Activated naive CD4-positive, alpha-beta T cell treated with anti-CD3 and anti-CD28 coated beads for 36 hours (primary cell): ENCODE measurements at regions of chr20 and their contacts with region 1.

Region 1: DNA sequence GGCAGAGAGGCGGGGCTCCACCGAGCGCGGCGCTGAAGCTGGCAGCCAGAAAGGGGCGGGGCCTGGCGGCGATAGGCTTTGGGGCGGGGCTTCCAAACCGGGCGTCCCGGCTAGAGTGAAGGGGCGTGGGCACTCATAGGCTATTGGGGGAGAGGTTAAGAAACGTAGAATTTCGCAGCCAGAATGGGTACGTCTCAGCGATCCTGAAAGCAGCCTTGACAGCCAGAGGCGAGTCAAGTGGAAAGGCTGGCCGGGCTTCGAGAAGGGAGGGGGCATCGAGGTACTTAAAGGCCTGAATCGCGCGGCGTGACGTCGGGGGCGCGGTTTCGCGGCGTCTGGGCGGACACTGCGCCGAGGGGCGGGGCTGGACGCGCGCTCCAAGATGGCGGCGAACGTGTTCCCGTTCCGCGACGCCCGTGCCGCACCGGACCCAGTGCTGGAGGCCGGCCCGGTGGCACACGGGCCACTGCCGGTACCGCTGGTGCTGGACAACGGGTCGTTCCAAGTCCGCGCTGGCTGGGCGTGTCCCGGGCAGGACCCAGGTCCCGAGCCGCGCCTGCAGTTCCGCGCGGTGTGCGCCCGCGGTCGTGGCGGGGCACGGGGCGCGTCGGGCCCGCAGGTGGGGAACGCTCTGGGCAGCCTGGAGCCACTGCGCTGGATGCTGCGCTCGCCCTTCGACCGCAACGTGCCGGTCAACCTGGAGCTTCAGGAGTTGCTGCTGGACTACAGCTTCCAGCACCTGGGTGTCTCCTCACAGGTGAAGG is at the start of gene ACTR5:
- DNase-seq: peak; percentile 97
- H3K4me3 Mint-ChIP-seq: peak within 1 kb of the TSS; percentile 97
- H3K27ac Mint-ChIP-seq: peak within 1 kb of the TSS; percentile 93
- H3K4me1 Mint-ChIP-seq: peaks cover 15% of the 10 kb centered on the region
- H3K27me3 Mint-ChIP-seq: no peaks in the 10 kb centered on the region
- total RNA-seq, gene ACTR5: 8.3 to 9.4 TPM

Region 2: GRCh38 chr20:38645980-38646858 is 102.1 kb before region 1 on chr20:
- CTCF ChIA-PET with region 1: interaction called, 71 read pairs
- intact Hi-C with region 1: loop called (anchors 1 kb)
- DNase-seq: peak; percentile 91
- H3K4me3 Mint-ChIP-seq: peak overlapping the region; percentile 53
- H3K27ac Mint-ChIP-seq: no peak overlapping the region
- H3K4me1 Mint-ChIP-seq: peaks cover 11% of the 10 kb centered on the region
- H3K27me3 Mint-ChIP-seq: peaks cover 26% of the 10 kb centered on the region

Region 3: DNA sequence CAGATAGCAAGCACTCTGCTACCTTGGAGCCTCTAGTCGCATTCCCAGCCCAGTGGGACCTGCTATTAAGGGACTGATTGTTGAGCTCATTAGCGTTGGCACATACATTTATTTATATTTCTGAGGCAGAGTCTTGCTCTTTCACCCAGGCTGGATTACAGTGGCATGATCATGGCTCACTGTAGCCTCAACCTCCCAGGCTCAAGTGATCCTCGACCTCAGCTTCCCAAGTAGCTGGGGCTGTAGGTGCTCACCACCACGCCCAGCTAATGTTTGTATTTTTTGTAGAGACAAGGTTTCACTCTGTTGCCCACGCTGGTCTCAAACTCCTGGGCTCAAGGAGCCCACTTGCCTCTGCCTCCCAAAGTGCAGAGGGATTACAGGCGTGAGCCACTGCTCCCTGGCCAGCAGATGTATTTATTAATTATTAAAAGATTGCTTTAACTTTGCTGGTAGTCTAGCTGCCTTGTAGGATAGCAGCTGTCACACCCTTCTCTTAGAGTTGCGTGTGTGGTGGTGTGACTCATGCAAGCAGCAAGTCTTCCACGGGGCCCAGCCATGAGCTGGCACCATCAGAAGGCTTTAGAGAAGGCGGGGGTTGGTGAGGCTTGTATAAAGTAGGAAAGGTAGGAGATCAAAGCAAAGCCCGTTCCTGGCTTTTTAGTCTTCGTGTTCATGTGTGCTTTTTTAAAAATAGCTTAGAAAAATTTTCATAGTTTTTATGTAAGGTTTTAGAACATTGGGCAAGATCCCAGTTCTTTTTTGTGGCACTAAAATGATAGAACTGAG is 16.5 kb after region 1 on chr20:
- CTCF ChIA-PET with region 1: interaction called, 11 read pairs
- intact Hi-C with region 1: no loop called
- DNase-seq: peak; percentile 80
- H3K4me3 Mint-ChIP-seq: no peak overlapping the region
- H3K27ac Mint-ChIP-seq: peak overlapping the region; percentile 33
- H3K4me1 Mint-ChIP-seq: peaks cover 21% of the 10 kb centered on the region
- H3K27me3 Mint-ChIP-seq: no peaks in the 10 kb centered on the region

Region 4: GRCh38 chr20:38926142-38926933 is 178.1 kb after region 1 on chr20 and contains the start of gene FAM83D:
- CTCF ChIA-PET with region 1: no interaction called
- intact Hi-C with region 1: loop called (anchors 1 kb)
- DNase-seq: peak; percentile 97
- H3K4me3 Mint-ChIP-seq: peak within 1 kb of the TSS; percentile 80
- H3K27ac Mint-ChIP-seq: peak within 1 kb of the TSS; percentile 30
- H3K4me1 Mint-ChIP-seq: peaks cover 17% of the 10 kb centered on the region
- H3K27me3 Mint-ChIP-seq: no peaks in the 10 kb centered on the region
- total RNA-seq, gene FAM83D: 13.6 TPM